Natural killer cell (primary cell): ENCODE measurements at regions of chr19 and their contacts with region 1.

Region 1: GRCh38 chr19:55258828-55259539 is at the start of gene PPP6R1:
- DNase-seq: peak; percentile 92 to 98
- ATAC-seq: peak; percentile 77 to 93 (median 84)
- H3K4me3 ChIP-seq: peak within 1 kb of the TSS; percentile 91
- H3K4me3 Mint-ChIP-seq: peak within 1 kb of the TSS; percentile 98
- H3K27ac ChIP-seq: peak within 1 kb of the TSS; percentile 95
- H3K27ac Mint-ChIP-seq: peak within 1 kb of the TSS; percentile 93 to 99
- H3K4me1 ChIP-seq: peaks cover 54% of the 10 kb centered on the region
- H3K4me1 Mint-ChIP-seq: peaks cover 51 to 53% of the 10 kb centered on the region in 2 donors
- H3K27me3 ChIP-seq: no peaks in the 10 kb centered on the region
- H3K27me3 Mint-ChIP-seq: no peaks in the 10 kb centered on the region
- CTCF ChIP-seq: no peak
- total RNA-seq, gene PPP6R1: 252 to 275 (median 260) TPM

Region 2: DNA sequence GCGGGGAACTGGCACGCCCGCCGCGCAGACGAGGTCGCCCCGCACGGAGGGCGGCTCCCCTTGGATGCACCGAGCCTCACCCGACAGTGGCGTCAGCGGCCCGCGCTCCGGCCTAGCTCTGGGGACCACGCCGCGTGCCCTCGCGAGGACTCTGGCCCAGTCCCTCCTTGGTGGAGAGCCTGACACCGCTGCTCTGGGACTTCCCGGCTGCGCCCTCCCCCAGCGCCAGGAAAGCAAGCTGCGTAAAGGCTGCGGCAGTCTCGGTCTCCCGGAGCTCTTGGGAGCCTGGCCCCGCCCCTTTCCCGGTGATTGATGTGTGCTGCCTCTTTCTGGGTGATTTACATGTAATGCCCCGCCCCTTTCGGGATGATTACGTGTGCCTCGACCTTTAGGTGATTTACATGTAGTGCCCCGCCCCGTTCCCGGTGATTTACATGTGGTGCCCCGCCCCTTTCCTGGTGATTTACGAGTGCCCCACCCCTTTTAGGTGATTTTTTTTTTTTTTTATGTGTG is 795.4 kb before region 1 on chr19 and contains the start of gene LENG9:
- intact Hi-C with region 1: loop called (anchors 1 kb)
- DNase-seq: peak; percentile 94 to 99
- ATAC-seq: peak; percentile 69 to 83 (median 72)
- H3K4me3 ChIP-seq: peak within 1 kb of the TSS; percentile 48
- H3K4me3 Mint-ChIP-seq: peak within 1 kb of the TSS; percentile 83
- H3K27ac ChIP-seq: peak within 1 kb of the TSS; percentile 83
- H3K27ac Mint-ChIP-seq: peak within 1 kb of the TSS; percentile 88 to 97
- H3K4me1 ChIP-seq: peaks cover 30% of the 10 kb centered on the region
- H3K4me1 Mint-ChIP-seq: peaks cover 33 to 48% of the 10 kb centered on the region in 2 donors
- H3K27me3 ChIP-seq: no peaks in the 10 kb centered on the region
- H3K27me3 Mint-ChIP-seq: peaks cover under 1 to 6% of the 10 kb centered on the region in 2 donors
- CTCF ChIP-seq: no peak
- total RNA-seq, gene LENG9: 3.2 to 5.6 (median 4.3) TPM

Region 3: GRCh38 chr19:54916822-54917221 is 342.2 kb before region 1 on chr19:
- intact Hi-C with region 1: loop called (anchors 10 kb)
- DNase-seq: peak; percentile 24 to 38
- ATAC-seq: peak; percentile 58 to 78 (median 68)
- H3K4me3 ChIP-seq: no peak overlapping the region
- H3K4me3 Mint-ChIP-seq: peak overlapping the region; percentile 89
- H3K27ac ChIP-seq: peak overlapping the region; percentile 61
- H3K27ac Mint-ChIP-seq: peak overlapping the region; percentile 83 to 87
- H3K4me1 ChIP-seq: peaks cover 65% of the 10 kb centered on the region
- H3K4me1 Mint-ChIP-seq: peaks cover 48 to 70% of the 10 kb centered on the region in 2 donors
- H3K27me3 ChIP-seq: no peaks in the 10 kb centered on the region
- H3K27me3 Mint-ChIP-seq: no peaks in the 10 kb centered on the region
- CTCF ChIP-seq: no peak

Region 4: DNA sequence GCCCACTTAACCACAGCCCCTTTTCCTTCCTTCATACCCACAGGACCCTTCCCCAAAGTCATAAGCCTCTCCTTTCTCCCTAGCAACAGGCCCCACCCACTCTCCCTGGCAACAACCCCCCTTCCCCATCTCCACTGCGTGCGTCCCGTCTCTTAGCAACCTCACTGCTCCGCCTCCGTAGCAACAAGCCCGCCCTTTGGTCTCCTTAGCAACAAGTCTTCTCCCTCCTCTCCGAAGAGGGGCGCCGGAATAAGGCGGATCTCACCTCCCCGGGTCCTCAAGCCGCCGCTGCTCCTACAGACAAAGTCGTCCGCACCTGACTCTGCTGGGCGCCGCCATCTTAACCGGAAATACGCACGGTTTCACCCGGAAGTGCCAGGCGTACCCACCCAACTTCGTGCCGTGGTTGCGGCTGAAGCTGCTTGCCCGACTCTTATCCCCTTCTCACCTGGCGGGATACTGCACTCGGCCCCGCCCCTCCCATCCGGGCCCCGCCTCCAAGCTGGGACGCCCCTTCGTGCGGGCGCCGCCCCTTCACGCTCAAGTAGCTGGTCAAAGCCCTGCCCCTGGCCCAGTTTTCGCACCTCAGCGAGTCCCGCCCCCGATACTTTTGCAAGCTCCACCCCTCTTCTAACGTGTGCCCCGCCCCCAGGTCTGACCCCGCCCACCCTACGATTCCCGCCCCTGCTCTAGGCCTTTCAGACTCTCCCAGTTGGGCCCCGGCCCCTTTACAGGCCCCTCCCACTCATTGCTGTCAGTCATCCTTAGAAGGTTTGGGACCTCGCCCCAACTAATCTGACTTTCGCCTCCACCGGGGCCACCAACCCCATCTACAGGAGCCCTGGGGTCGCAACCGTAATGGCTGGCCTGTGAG is 21.0 kb after region 1 on chr19 and contains the start of gene HSPBP1:
- intact Hi-C with region 1: loop called (anchors 1 kb)
- DNase-seq: peak; percentile 95 to 98
- ATAC-seq: peak; percentile 81 to 88 (median 82)
- H3K4me3 ChIP-seq: peak within 1 kb of the TSS; percentile 89
- H3K4me3 Mint-ChIP-seq: peak within 1 kb of the TSS; percentile 100
- H3K27ac ChIP-seq: peak within 1 kb of the TSS; percentile 93
- H3K27ac Mint-ChIP-seq: peak within 1 kb of the TSS; percentile 98
- H3K4me1 ChIP-seq: peaks cover 55% of the 10 kb centered on the region
- H3K4me1 Mint-ChIP-seq: peaks cover 43 to 48% of the 10 kb centered on the region in 2 donors
- H3K27me3 ChIP-seq: no peaks in the 10 kb centered on the region
- H3K27me3 Mint-ChIP-seq: peaks cover 0 to 7% of the 10 kb centered on the region in 2 donors
- CTCF ChIP-seq: no peak
- total RNA-seq, gene HSPBP1: 17.1 to 19.5 (median 18.5) TPM